Colonic mucosa (tissue), 4 donors: ENCODE measurements at regions of chr5 and their contacts with region 1.

Region 1: GRCh38 chr5:14685757-14686156 is 21.2 kb downstream of the OTULIN start:
- DNase-seq: peak; percentile 33
- H3K4me3 ChIP-seq: no peak overlapping the region
- H3K27ac ChIP-seq: no peak overlapping the region
- H3K4me1 ChIP-seq: no peaks in the 10 kb centered on the region
- H3K27me3 ChIP-seq: no peaks in the 10 kb centered on the region
- CTCF ChIP-seq: peak; percentile 56

Region 2: GRCh38 chr5:14452685-14453454 is 232.9 kb before region 1 on chr5:
- intact Hi-C with region 1: no loop called
- DNase-seq: no peak
- H3K4me3 ChIP-seq: no peak overlapping the region
- H3K27ac ChIP-seq: no peak overlapping the region
- H3K4me1 ChIP-seq: peaks cover 12% of the 10 kb centered on the region
- H3K27me3 ChIP-seq: no peaks in the 10 kb centered on the region
- CTCF ChIP-seq: no peak

Region 3: GRCh38 chr5:14534773-14535172 is 151.0 kb before region 1 on chr5:
- intact Hi-C with region 1: no loop called
- DNase-seq: no peak
- H3K4me3 ChIP-seq: no peak overlapping the region
- H3K27ac ChIP-seq: peak overlapping the region; percentile 28
- H3K4me1 ChIP-seq: no peaks in the 10 kb centered on the region
- H3K27me3 ChIP-seq: no peaks in the 10 kb centered on the region
- CTCF ChIP-seq: no peak

Region 4: GRCh38 chr5:15013654-15014463 is 328.1 kb after region 1 on chr5:
- intact Hi-C with region 1: loop called (anchors 10 kb)
- DNase-seq: no peak
- H3K4me3 ChIP-seq: no peak overlapping the region
- H3K27ac ChIP-seq: no peak overlapping the region
- H3K4me1 ChIP-seq: peaks cover 3% of the 10 kb centered on the region
- H3K27me3 ChIP-seq: no peaks in the 10 kb centered on the region
- CTCF ChIP-seq: peak; percentile 53

Region 5: GRCh38 chr5:15365070-15365469 is 679.3 kb after region 1 on chr5:
- intact Hi-C with region 1: no loop called
- DNase-seq: no peak
- H3K4me3 ChIP-seq: no peak overlapping the region
- H3K27ac ChIP-seq: no peak overlapping the region
- H3K4me1 ChIP-seq: no peaks in the 10 kb centered on the region
- H3K27me3 ChIP-seq: no peaks in the 10 kb centered on the region
- CTCF ChIP-seq: no peak